Aorta (tissue), 5 donors: ENCODE measurements at regions of chr6 and their contacts with region 1.

Region 1: DNA sequence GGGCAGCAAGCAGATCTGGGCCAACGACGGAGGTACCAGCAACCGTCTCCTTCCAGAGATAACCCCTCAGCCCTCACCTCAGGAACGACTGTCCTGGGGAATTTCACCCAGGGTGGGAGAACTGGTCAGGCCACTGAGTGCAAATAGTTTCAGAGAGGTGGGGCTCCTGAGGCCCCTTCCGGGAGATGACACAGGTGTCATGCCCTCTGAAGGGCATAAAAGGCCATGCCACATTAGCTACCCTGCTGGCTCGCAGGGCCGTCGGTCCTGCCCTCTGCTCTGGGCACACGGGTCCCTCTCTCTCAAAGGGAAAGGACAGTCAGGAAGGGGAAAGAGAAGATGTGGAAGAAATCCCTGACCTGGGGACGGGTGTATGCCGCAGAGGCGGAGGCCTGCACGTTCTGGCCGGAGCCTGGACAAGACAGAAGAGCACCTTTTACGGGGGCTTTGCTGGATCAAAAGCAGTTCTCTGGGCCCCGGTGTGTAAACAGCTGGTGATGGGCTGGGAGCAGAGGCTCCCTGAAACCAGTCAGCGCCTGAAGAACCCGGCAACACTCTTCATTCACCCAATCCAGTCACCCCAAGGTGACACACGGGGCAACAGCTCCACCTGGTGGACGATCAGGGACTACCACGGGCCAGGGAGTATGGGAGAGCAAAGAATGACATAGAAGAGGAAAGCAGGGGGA is 6.4 kb upstream of the TAF8 start:
- DNase-seq: peak; percentile 91 to 96
- ATAC-seq: peak; percentile 89
- H3K4me3 ChIP-seq: no peak overlapping the region
- H3K27ac ChIP-seq: no peak overlapping the region
- H3K4me1 ChIP-seq: peaks cover 0 to 2% of the 10 kb centered on the region in 2 donors
- H3K27me3 ChIP-seq: no peaks in the 10 kb centered on the region

Region 2: DNA sequence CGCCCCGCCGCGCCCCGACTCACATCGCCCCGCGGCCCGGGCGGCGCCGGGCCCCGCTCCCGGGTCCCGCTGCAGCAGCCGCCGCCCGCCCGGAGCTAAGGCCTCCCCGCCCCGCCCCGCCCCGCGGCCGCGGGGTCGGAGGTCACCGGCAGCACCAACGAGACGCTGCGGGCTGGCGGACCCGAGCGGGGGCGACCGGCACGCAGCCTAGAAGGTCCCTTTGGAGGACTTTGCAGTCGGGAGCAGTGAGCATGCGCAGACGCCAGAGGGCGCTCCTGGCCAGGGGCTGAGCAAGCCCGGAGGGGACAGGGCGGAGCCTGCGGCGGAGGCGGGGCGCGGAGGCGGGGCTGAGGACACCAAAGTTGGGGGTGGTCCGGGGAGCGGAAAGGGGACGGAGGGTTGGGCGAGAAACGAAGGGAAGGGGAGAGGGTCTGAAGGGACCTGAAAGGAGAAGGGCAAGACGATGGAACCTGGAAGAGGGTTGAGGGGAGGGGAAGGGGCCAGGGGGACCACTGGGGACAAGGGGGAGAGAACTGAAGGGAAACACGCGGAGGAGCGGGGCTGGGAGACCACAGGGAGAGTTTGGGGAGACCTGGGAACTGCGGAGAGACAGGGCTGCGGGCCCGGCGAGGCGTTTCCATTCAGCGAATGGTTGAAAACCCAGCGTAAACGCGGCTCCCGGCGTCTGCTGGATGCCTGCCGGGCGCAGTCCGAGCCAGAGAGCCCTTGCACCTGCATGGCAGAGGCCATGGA is 264.0 kb before region 1 on chr6 and contains the start of gene FRS3:
- intact Hi-C with region 1: loop called (anchors 2 to 5 kb)
- DNase-seq: peak; percentile 99 to 100
- ATAC-seq: peak; percentile 98
- H3K4me3 ChIP-seq: peak within 1 kb of the TSS; percentile 71 to 85
- H3K27ac ChIP-seq: peak within 1 kb of the TSS in 1 of 2 donors; percentile 62
- H3K4me1 ChIP-seq: no peaks in the 10 kb centered on the region
- H3K27me3 ChIP-seq: no peaks in the 10 kb centered on the region
- total RNA-seq, gene FRS3: 3.7 to 5.4 TPM

Region 3: DNA sequence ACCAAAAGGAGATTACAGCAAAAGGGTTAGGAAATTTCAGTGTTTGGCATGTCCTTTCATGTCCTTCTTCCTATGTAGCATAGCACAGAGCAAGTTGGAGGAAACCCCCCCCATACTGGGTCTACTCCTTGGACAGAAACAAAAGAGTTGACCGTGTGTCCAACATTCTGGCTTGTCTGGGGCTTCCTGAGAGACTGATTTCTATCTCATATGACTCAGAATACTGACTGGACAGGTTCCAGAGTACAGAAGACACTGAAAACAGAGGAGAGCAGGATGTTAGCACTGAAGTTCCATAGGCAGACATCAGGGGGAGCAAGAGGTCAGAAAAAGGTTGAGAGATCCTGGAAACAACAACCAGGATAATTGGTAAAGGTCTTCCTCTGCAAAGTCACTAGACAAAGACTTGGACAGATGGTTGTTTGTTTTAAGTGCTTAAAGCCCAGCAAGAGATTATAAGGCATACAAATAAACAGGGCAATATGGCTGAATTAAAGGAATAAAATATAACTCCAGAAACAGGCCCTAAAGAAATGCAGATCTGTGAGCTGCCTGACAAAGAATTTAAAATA is 197.2 kb before region 1 on chr6:
- intact Hi-C with region 1: loop called in 1 of 2 experiments (anchors 2 kb)
- DNase-seq: no peak
- ATAC-seq: peak; percentile 80
- H3K4me3 ChIP-seq: no peak overlapping the region
- H3K27ac ChIP-seq: no peak overlapping the region
- H3K4me1 ChIP-seq: no peaks in the 10 kb centered on the region
- H3K27me3 ChIP-seq: no peaks in the 10 kb centered on the region

Region 4: GRCh38 chr6:41936073-41936837 is 107.7 kb before region 1 on chr6:
- intact Hi-C with region 1: loop called (anchors 2 to 5 kb)
- DNase-seq: peak; percentile 75 to 85
- ATAC-seq: peak; percentile 85
- H3K4me3 ChIP-seq: no peak overlapping the region
- H3K27ac ChIP-seq: peak overlapping the region in 1 of 2 donors; percentile 10
- H3K4me1 ChIP-seq: no peaks in the 10 kb centered on the region
- H3K27me3 ChIP-seq: no peaks in the 10 kb centered on the region

Region 5: GRCh38 chr6:42217519-42218367 is 173.8 kb after region 1 on chr6 and contains the start of gene MRPS10:
- intact Hi-C with region 1: no loop called
- DNase-seq: peak; percentile 94 to 96
- ATAC-seq: peak; percentile 99
- H3K4me3 ChIP-seq: peak within 1 kb of the TSS; percentile 72 to 88
- H3K27ac ChIP-seq: no peak within 1 kb of the TSS
- H3K4me1 ChIP-seq: no peaks in the 10 kb centered on the region
- H3K27me3 ChIP-seq: no peaks in the 10 kb centered on the region
- total RNA-seq, gene MRPS10: 20.2 to 24.3 TPM